ENCODE measurements at regions of chr19 and their contacts with region 1.

Region 1: GRCh38 chr19:48110350-48110966 is at the start of gene PLA2G4C:
- DNase-seq: peak; percentile 77
- ATAC-seq: peak; percentile 85
- H3K4me3 Mint-ChIP-seq: peak within 1 kb of the TSS; percentile 86
- H3K27ac Mint-ChIP-seq: peak within 1 kb of the TSS; percentile 88
- H3K4me1 Mint-ChIP-seq: peaks cover 16% of the 10 kb centered on the region
- H3K27me3 Mint-ChIP-seq: no peaks in the 10 kb centered on the region
- CTCF ChIP-seq: no peak
- total RNA-seq, gene PLA2G4C: 14.9 and 16.6 TPM in 2 replicates

Region 2: GRCh38 chr19:47707135-47707925 is 403.1 kb before region 1 on chr19:
- CTCF ChIA-PET with region 1: no interaction called
- POLR2A ChIA-PET with region 1: no interaction called
- intact Hi-C with region 1: no loop called
- DNase-seq: peak; percentile 56
- ATAC-seq: peak; percentile 77
- H3K4me3 Mint-ChIP-seq: no peak overlapping the region
- H3K27ac Mint-ChIP-seq: no peak overlapping the region
- H3K4me1 Mint-ChIP-seq: no peaks in the 10 kb centered on the region
- H3K27me3 Mint-ChIP-seq: peaks cover 16% of the 10 kb centered on the region
- CTCF ChIP-seq: no peak

Region 3: DNA sequence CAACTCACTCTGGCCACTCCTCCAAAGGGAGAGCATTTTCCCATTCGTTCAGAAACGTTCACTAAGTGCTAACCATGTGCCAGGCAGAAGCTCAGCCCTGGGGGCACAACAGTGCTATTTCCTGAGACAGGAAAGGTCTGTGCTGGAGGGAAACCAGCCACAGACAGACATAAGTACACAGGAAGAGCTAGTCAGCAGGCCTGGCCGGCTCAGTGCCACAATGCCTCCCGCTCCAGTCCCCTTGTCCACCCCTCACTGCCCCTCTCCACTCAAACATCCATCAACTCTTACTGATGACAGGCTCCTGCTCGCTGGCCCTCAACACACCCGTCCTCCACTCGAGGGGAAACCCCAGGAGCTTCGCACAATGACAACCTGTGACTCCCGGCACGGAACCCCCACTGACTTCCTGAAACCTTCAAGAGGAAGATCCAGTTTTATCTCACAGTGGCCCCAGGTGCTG is 11.5 kb after region 1 on chr19:
- CTCF ChIA-PET with region 1: interaction called, 6 read pairs
- POLR2A ChIA-PET with region 1: interaction called, 4 read pairs
- intact Hi-C with region 1: loop called (anchors 1 kb)
- DNase-seq: no peak
- ATAC-seq: peak; percentile 45
- H3K4me3 Mint-ChIP-seq: no peak overlapping the region
- H3K27ac Mint-ChIP-seq: peak overlapping the region; percentile 78
- H3K4me1 Mint-ChIP-seq: peaks cover 20% of the 10 kb centered on the region
- H3K27me3 Mint-ChIP-seq: no peaks in the 10 kb centered on the region
- CTCF ChIP-seq: no peak

Region 4: GRCh38 chr19:48152551-48152950 is 42.1 kb after region 1 on chr19:
- CTCF ChIA-PET with region 1: interaction called, 77 read pairs
- POLR2A ChIA-PET with region 1: no interaction called
- intact Hi-C with region 1: loop called (anchors 1 kb)
- DNase-seq: peak; percentile 52
- ATAC-seq: peak; percentile 74
- H3K4me3 Mint-ChIP-seq: no peak overlapping the region
- H3K27ac Mint-ChIP-seq: no peak overlapping the region
- H3K4me1 Mint-ChIP-seq: peaks cover 2% of the 10 kb centered on the region
- H3K27me3 Mint-ChIP-seq: no peaks in the 10 kb centered on the region
- CTCF ChIP-seq: peak; percentile 44

Region 5: GRCh38 chr19:48190288-48190884 is 79.9 kb after region 1 on chr19:
- CTCF ChIA-PET with region 1: no interaction called
- POLR2A ChIA-PET with region 1: interaction called, 3 read pairs
- intact Hi-C with region 1: loop called (anchors 2 kb)
- DNase-seq: no peak
- ATAC-seq: peak; percentile 65
- H3K4me3 Mint-ChIP-seq: no peak overlapping the region
- H3K27ac Mint-ChIP-seq: no peak overlapping the region
- H3K4me1 Mint-ChIP-seq: peaks cover 25% of the 10 kb centered on the region
- H3K27me3 Mint-ChIP-seq: no peaks in the 10 kb centered on the region
- CTCF ChIP-seq: no peak

Region 6: DNA sequence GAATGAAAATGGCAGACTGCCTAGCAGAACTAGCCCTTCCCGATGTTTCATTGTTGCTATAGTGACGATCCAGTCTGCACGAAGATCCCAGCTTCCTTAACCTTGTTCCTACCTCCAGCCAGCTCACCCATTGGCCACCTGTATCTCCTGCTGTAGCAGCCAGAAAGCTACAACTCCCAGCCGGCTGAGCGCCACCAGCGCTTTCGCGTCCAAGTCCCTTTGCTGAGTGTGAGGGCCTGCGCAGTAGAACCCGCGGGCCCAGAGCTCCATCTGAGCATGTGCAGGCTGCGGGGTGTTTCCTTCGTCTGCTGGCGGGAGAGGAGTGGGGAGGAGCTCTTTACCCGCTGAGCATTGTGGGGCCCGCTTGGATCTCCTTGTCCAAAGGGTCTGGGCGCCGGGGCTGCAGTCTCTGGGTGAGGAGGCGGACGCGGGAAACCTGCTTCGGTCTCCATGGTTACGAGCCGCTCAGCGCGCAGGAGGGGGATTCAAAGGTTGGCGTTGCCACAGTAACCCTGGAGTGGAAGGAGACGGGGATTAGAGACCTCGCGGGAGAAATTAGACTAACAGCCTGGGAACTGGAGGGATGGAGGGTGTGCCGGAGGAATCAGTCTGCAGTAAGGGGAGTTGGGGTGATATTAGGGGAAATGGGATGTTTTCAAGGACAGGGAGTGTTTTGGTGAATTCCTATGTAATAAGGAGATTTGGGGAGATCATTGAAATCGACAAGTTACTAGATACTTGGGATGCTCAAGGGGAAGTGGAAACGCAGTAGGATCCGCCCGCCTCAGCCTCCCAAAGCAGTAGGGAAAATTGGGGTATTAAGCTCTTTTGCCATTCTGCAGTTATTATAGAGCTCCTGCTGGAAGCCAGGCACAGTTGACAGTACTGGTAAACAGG is 93.5 kb after region 1 on chr19:
- CTCF ChIA-PET with region 1: interaction called, 10 read pairs
- POLR2A ChIA-PET with region 1: interaction called, 12 read pairs
- intact Hi-C with region 1: no loop called
- DNase-seq: peak; percentile 79
- ATAC-seq: peak; percentile 100
- H3K4me3 Mint-ChIP-seq: no peak overlapping the region
- H3K27ac Mint-ChIP-seq: no peak overlapping the region
- H3K4me1 Mint-ChIP-seq: peaks cover 6% of the 10 kb centered on the region
- H3K27me3 Mint-ChIP-seq: no peaks in the 10 kb centered on the region
- CTCF ChIP-seq: no peak

Region 7: GRCh38 chr19:48271531-48272151 is 161.2 kb after region 1 on chr19:
- CTCF ChIA-PET with region 1: interaction called, 11 read pairs
- POLR2A ChIA-PET with region 1: no interaction called
- intact Hi-C with region 1: no loop called
- DNase-seq: peak; percentile 37
- ATAC-seq: peak; percentile 75
- H3K4me3 Mint-ChIP-seq: peak overlapping the region; percentile 95
- H3K27ac Mint-ChIP-seq: peak overlapping the region; percentile 80
- H3K4me1 Mint-ChIP-seq: peaks cover 14% of the 10 kb centered on the region
- H3K27me3 Mint-ChIP-seq: no peaks in the 10 kb centered on the region
- CTCF ChIP-seq: no peak

Region 8: DNA sequence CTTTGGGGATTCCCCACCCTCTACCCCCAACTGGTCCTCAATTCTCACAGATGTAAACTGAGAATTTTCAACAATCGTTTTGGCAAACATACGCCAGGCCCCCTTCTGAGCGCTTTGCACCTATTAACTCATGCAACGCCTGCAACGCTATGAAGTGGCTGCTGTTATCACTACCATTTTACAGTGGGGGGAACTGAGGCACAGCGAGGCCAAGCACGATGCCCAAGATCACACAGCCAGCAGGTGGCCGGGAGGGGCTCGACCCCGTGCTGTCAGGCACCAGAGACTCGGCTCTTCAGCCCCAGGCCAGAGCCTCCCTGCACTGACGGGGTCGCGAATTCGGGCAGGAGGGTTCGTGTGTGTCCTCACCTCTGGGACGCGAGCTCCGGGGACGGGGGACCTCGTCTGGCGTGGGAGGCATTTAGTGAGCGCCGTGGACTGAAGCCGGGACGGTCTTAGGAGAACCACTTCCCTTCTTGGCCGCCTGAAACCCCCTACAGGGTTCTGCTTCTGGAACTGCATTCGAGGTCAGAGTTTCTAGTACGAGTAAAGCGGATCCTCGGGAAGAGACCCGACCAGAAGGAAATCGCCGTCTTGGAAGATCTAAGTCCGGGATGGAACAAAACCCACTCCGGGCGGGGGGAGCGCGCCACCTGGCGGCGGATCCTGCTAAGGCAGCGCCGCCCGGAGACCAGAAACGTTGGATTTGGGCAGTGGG is 180.5 kb after region 1 on chr19:
- CTCF ChIA-PET with region 1: no interaction called
- POLR2A ChIA-PET with region 1: no interaction called
- intact Hi-C with region 1: loop called (anchors 1 kb)
- DNase-seq: peak; percentile 69
- ATAC-seq: peak; percentile 71
- H3K4me3 Mint-ChIP-seq: peak overlapping the region; percentile 81
- H3K27ac Mint-ChIP-seq: no peak overlapping the region
- H3K4me1 Mint-ChIP-seq: peaks cover 8% of the 10 kb centered on the region
- H3K27me3 Mint-ChIP-seq: no peaks in the 10 kb centered on the region
- CTCF ChIP-seq: peak; percentile 98